Ovary (tissue), 10 donors: ENCODE measurements at regions of chr5 and their contacts with region 1.

Region 1: GRCh38 chr5:99922386-99922785 is 612.8 kb upstream of the FAM174A start:
- DNase-seq: no peak
- H3K4me3 ChIP-seq: no peak overlapping the region
- H3K27ac ChIP-seq: no peak overlapping the region
- H3K4me1 ChIP-seq: no peaks in the 10 kb centered on the region
- H3K27me3 ChIP-seq: no peaks in the 10 kb centered on the region
- CTCF ChIP-seq: no peak
- EP300 ChIP-seq: no peak
- POLR2A ChIP-seq: no peak

Region 2: DNA sequence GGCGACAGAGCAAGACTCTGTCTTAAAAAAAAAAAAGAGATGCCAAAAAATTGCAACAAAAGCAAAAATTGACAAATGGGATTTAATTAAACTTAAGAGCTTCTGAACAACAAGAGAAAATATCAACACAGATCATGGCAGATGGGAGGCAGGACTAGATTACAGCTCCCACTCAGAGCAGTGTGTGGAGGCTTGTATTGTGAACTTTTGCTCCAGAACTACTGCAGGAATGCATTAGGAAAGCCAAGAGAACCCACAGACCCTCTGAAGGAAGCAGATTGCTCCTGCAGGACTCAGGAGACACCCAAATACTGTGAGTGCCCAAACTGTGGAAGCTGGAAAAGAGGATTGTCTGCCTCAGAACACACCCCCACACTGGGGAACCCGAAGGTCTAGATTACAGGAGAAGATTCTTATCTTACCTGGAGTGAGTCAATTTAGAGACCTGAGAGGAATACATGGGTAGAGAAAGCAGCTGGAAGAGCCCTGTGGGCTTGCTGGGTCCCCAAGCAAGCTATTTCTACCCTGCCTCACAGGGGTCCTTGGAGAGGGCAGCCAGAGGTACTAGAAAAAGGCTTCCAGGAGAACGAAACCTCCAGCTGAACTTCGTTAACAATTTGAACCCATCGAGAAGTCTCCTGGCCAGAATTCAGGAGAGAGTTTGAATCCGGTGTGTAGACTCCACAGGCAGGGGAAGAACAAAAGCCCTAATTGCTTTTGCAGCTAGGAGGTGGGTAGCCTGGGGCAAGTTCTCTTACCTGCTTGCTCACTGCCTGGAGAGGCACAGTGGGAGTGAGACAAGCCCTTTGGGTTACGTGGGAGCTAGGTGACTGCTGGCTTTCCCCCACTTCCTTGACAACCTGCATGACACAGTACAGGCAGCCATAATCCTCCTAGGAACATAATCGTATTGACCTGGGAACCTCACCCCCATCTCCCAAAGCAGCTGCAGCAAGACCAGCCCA is 1742.3 kb before region 1 on chr5:
- intact Hi-C with region 1: loop called in 1 of 4 experiments (anchors 5 kb)
- DNase-seq: no peak
- H3K4me3 ChIP-seq: no peak overlapping the region
- H3K27ac ChIP-seq: no peak overlapping the region
- H3K4me1 ChIP-seq: no peaks in the 10 kb centered on the region
- H3K27me3 ChIP-seq: no peaks in the 10 kb centered on the region
- CTCF ChIP-seq: no peak
- EP300 ChIP-seq: no peak
- POLR2A ChIP-seq: no peak